RWPE1 (cell line): ENCODE measurements at regions of chr1 and their contacts with region 1.

Region 1: GRCh38 chr1:2414083-2414958 is 2.0 kb upstream of the PEX10 start:
- DNase-seq: peak; percentile 77
- H3K27ac ChIP-seq: peak overlapping the region; percentile 82
- CTCF ChIP-seq: peak; percentile 94

Region 2: DNA sequence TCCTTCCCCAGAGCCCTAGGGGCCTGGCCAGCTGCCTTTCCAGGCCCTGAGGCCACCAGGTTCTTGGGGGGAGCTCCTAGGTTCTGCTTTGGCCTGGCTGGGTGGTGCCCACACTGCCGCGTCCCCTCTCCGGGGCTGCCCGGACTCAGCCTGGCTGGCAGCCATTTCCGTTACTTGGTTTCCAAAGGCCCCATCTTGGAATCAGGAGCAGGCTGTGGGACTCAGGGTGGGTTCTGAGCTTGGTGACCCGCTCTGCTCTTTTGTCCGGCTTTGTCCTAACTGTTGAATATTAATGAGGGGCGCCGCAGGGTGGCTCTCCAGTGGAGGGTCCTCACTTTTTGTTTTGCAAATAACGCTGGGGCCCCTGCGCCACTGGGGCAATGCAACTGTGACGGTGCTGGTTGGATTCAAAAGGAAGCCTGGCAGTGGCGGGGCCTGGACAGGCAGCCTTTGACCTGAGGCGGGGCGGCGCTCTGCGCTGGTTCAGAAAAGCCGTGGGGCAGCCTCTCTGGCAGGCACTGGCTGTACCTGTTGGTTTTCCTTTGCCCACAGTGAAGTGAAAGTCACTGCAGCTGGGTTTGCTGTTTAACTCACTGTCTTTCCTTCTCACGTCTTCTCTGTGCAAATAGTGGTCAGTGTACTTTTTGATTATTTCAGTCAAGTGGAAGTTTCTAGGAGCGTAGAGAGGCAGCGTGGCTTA is 166.0 kb before region 1 on chr1:
- CTCF ChIA-PET with region 1: no interaction called
- POLR2A ChIA-PET with region 1: no interaction called
- DNase-seq: no peak
- H3K27ac ChIP-seq: peak overlapping the region; percentile 91
- CTCF ChIP-seq: no peak

Region 3: DNA sequence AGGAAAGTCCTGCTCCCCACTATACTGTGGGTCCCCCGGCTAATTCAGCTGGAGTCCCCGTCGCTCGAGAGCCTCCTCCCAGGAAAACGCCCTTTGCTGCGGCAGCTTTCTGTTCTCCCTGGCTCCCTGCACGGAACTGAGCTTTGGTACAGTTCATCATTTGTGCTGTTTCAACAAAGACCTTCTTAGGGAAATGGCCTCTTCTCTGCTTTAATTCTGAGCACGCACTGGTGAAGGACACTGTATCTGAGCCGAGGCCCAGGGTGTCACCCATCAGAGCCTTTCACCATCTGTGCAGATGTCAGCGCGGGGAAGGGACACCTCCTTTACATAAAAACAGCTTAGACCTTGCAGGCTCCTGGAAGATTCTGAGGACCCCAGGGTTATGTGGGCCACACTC is 11.6 kb after region 1 on chr1:
- CTCF ChIA-PET with region 1: interaction called, 10 read pairs
- POLR2A ChIA-PET with region 1: interaction called, 5 read pairs
- DNase-seq: no peak
- H3K27ac ChIP-seq: peak overlapping the region; percentile 96
- CTCF ChIP-seq: no peak

Region 4: GRCh38 chr1:2534687-2535441 is 120.5 kb after region 1 on chr1:
- CTCF ChIA-PET with region 1: interaction called, 10 read pairs
- POLR2A ChIA-PET with region 1: no interaction called
- DNase-seq: peak; percentile 91
- H3K27ac ChIP-seq: peak overlapping the region; percentile 93
- CTCF ChIP-seq: no peak